Ovary (tissue), 10 donors: ENCODE measurements at regions of chr11 and their contacts with region 1.

Region 1: DNA sequence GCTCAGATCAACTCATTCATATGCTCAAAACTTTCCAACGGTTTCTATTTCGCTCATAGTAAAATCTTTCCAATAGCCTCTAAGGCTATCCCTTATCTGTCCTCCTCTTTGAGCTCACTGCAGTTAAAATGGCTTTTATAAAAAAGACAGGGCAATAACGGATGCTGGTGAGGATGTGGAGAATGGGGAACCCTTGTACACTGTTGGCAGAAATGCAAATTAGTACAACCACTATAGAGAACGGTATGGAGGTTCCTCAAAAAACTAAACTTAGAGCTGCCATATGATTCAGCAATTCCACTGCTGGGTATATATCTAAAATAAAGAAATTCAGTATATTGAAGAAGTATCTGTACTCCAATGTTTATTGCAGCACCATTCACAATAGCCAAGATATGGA is 345.6 kb downstream of the DLG2 start:
- DNase-seq: no peak
- H3K4me3 ChIP-seq: no peak overlapping the region
- H3K27ac ChIP-seq: no peak overlapping the region
- H3K4me1 ChIP-seq: no peaks in the 10 kb centered on the region
- H3K27me3 ChIP-seq: no peaks in the 10 kb centered on the region
- CTCF ChIP-seq: no peak
- EP300 ChIP-seq: no peak
- POLR2A ChIP-seq: no peak

Region 2: DNA sequence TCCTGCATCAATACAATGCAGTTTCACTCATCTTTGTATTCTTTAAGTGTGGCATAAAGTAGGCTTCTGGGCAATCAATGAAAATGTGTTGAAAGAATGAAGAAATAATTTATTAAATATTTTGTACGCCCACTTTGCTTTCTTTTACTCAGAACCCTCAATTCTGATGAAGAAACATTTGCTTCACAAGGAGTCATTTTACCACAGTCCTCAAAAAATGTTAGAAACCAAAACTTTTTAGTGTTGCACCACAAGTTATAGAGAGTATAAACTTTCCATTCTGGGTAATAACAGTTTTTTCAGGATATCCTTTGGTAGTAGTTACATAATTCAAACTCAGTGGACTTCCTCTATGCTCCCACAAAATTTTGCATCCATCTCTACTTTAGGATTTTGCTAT is 14.9 kb before region 1 on chr11:
- intact Hi-C with region 1: loop called in 1 of 4 experiments (anchors 1 kb)
- DNase-seq: no peak
- H3K4me3 ChIP-seq: no peak overlapping the region
- H3K27ac ChIP-seq: no peak overlapping the region
- H3K4me1 ChIP-seq: no peaks in the 10 kb centered on the region
- H3K27me3 ChIP-seq: no peaks in the 10 kb centered on the region
- CTCF ChIP-seq: no peak
- EP300 ChIP-seq: no peak
- POLR2A ChIP-seq: no peak